AG04449 (cell line): ENCODE measurements at regions of chr6 and their contacts with region 1.

Region 1: GRCh38 chr6:41801380-41801779 is 13.9 kb downstream of the TOMM6 start:
- DNase-seq: no peak
- H3K4me3 ChIP-seq: no peak overlapping the region
- CTCF ChIP-seq: peak; percentile 60

Region 2: DNA sequence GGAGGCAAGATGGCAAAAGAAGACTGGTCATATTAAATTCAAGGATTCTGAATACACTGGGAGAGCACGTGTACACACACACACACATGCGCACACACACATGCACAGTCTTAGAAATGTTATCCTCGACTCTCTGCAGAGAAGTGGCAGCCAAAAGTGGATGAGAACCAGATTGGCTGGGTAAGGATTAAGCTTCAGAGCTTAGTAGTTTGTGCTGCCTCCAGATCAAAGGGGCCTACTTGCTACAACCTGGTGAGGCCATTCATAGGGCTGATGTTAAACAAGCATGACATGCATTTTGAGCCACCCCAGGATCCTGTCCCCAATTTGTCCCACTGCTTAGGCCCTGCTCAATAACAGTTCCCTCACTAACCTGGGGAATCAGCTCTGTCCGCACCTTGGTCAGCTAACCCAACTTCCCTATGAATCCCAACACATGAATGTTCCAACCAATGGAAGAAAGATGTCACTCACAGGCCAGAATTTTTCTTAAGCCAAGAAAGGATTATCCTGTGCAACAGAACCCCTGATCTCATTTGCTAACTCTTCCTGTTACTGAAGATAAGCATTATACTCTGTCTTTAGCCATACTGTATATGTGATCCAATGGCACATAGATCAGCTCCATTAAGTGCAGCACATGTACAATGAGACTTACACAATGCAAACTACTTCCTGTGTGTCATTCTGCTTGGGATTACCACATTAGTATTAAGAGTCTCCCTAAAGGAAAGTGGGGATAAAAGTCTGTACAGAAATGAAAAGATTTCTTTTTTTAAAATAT is 17.1 kb after region 1 on chr6:
- CTCF ChIA-PET with region 1: interaction called, 13 read pairs
- POLR2A ChIA-PET with region 1: no interaction called
- DNase-seq: no peak
- H3K4me3 ChIP-seq: no peak overlapping the region
- CTCF ChIP-seq: no peak

Region 3: DNA sequence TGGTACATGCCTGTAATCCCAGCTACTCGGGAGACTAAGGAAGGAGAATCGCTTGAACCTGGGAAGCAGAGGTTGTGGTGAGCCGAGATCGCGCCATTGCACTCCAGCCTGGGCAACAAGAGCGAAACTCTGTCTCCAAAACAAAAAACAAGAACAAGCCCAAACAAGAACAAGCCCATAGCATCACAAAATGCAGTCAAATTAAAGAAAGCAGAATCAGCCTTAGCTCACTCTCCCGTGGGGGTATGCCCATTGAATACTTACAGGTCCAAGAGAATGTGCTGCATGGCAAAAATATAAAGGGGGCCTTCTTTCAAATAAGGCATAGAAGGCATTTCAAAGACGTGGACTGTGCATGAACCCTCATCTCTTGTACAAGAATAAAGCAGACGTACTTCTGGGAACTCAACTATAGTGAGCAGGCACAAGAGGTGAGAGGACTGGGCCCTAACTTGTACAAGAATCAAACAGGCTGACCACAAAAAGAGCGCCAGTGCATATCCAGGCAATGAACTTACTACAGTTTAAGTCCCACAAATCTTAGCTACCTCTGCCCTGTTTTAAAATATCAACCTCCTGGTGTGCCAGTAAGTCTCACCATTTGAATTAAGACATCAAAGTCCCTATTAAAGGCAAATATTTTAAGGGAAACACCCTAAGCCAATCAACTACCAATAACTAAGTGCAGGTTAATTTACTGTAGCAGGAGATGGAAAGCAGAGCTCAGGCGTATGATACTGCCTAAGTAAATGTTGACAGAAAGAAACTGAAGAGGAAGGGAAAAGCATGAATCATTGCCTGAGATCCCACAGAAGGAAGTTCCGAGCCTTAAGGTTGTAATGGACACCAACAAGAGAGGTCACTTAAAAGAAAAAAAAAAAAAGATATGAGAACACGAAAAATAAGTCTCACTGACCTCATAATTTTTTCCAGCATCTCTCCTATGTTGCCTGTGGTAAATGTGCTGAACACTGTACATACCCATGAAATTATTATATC is 23.5 kb after region 1 on chr6:
- CTCF ChIA-PET with region 1: interaction called, 10 read pairs
- POLR2A ChIA-PET with region 1: no interaction called
- DNase-seq: no peak
- H3K4me3 ChIP-seq: no peak overlapping the region
- CTCF ChIP-seq: no peak

Region 4: DNA sequence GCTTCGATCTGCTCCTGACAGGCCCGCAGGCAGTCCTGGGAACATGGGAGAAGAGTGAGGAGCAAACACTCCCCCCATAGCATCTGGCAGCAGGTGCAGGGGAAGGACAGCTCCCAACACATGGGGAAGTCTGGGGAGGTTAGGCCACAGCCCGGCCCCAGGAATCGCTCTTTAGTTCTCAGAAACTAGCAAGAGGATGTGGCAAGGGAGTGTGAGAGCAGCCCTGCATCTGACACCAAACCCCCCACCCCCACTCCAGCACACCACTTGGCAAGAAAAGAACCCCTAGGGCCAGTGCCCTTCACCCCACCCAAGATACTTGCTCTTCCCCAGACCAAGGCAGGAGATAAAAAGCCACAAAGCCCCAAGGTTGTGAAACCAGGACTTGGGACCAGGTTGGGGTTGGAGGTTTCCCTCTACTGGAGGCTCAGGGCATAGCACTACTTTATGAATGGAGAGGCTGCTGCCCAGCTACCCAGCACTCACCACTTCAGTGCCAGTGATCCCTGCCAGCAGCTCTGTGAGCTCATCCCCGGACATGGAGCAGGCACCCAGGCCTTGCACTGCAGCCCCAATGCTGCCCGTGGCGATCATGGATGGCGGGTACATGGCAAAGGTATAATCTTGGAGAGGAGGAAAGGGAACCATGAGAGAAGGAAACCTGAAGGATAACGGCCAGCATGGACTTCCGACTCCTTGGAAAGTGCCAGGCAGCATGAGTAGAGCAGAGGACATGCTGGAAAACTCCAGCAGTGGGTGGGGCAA is 134.9 kb after region 1 on chr6:
- CTCF ChIA-PET with region 1: interaction called, 52 read pairs
- POLR2A ChIA-PET with region 1: no interaction called
- DNase-seq: peak; percentile 65
- H3K4me3 ChIP-seq: no peak overlapping the region
- CTCF ChIP-seq: peak; percentile 83